Pancreas (tissue), 10 donors: ENCODE measurements at regions of chr3 and their contacts with region 1.

Region 1: DNA sequence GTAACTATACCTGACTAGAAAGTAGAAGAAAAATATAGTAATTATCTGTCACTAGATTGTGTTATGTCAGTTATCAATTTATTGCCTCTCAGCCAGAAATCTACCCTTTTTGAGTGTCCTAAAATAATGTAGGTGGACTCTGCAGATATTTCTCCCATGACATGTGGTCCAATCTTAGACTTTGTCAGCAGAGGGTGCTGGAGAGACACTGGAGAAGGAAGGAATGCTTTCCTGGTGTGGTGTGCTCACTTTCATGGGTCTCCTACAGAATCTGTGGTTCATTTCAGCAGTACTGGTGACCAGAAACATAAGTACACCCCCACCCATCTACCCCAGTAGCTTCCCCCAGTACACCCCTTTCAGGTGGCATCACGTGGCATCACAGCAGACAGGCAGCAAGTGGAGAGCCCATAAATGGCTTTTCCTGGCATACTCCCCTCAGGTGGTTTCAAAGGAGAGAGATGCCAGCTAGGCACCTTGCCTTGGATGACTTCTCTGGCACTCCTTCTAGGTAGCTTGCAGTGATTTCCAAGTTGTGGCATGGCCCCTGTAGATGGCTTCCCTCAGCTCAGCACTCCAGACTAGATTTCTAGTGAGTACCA is 114.7 kb downstream of the GADL1 start:
- DNase-seq: no peak
- ATAC-seq: peak in 1 of 4 donors; percentile 40
- H3K4me3 ChIP-seq: no peak overlapping the region
- H3K27ac ChIP-seq: no peak overlapping the region
- H3K4me1 ChIP-seq: no peaks in the 10 kb centered on the region
- H3K27me3 ChIP-seq: no peaks in the 10 kb centered on the region
- CTCF ChIP-seq: no peak

Region 2: DNA sequence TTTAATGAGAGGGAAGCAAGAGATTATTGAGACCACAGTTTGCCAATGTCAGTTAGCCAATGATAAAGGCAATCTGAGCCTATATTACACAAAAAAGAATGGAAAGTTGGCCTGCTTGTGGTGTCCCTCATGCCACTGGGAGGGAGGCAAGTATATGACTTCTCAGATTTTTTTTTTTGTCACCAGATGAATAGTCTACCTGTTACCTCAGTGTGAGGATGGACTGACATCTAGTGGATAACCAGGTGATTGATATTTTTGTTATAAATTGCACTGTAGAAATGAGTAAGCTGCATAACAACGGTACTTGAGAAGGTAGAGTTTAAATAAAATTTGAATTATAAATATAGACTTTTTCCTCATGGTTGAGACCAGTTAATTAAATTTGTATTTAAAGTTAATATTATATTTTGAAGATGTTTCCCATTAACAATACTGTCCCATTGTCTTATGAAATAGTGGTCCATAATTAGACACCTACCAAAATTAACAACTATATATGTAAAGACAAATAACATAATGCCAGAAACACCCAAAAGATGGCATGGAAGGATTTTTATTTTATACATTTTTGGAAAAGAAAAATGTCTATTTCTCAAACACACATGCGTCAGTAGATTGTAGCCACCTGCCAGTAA is 352.5 kb after region 1 on chr3:
- intact Hi-C with region 1: loop called in 1 of 3 experiments (anchors 10 kb)
- DNase-seq: no peak
- ATAC-seq: peak; percentile 71 to 86 (median 78)
- H3K4me3 ChIP-seq: no peak overlapping the region
- H3K27ac ChIP-seq: no peak overlapping the region
- H3K4me1 ChIP-seq: no peaks in the 10 kb centered on the region
- H3K27me3 ChIP-seq: no peaks in the 10 kb centered on the region
- CTCF ChIP-seq: peak in 3 of 4 donors; percentile 31 to 53 (median 49)